CD4-positive, alpha-beta T cell (primary cell): ENCODE measurements at regions of chr18 and their contacts with region 1.

Region 1: GRCh38 chr18:21632393-21632792 is 20.3 kb downstream of the SNRPD1 start:
- DNase-seq: peak in 1 of 14 experiments; percentile 8
- ATAC-seq: no peak
- H3K4me3 ChIP-seq: no peak overlapping the region
- H3K4me3 Mint-ChIP-seq: no peak overlapping the region
- H3K27ac ChIP-seq: no peak overlapping the region
- H3K27ac Mint-ChIP-seq: peak overlapping the region; percentile 27
- H3K4me1 ChIP-seq: peaks cover 5% of the 10 kb centered on the region
- H3K4me1 Mint-ChIP-seq: peaks cover 17% of the 10 kb centered on the region
- H3K27me3 ChIP-seq: no peaks in the 10 kb centered on the region
- H3K27me3 Mint-ChIP-seq: no peaks in the 10 kb centered on the region
- CTCF ChIP-seq: no peak

Region 2: DNA sequence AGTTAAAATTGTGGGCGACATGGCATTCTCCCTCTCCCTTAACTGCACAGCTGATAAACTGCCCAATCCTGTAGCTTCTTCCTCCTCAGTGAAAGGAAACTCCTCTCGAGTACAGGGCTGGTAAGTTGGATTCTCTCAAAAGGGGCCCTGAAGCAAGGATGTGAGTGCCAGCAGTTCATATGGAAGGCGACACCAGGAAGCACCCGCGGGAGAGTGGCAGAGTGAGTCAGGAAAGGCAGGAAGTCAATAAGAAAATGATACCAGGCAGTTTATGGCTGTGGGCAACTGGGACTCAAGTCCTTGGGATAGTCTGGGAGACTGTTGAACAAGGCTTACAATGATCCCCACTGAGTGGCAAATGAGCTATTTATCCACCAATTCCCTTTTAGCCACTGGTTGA is 37.3 kb after region 1 on chr18:
- CTCF ChIA-PET with region 1: no interaction called
- POLR2A ChIA-PET with region 1: no interaction called
- intact Hi-C with region 1: no loop called
- DNase-seq: no peak
- ATAC-seq: no peak
- H3K4me3 ChIP-seq: no peak overlapping the region
- H3K4me3 Mint-ChIP-seq: no peak overlapping the region
- H3K27ac ChIP-seq: no peak overlapping the region
- H3K27ac Mint-ChIP-seq: no peak overlapping the region
- H3K4me1 ChIP-seq: no peaks in the 10 kb centered on the region
- H3K4me1 Mint-ChIP-seq: no peaks in the 10 kb centered on the region
- H3K27me3 ChIP-seq: no peaks in the 10 kb centered on the region
- H3K27me3 Mint-ChIP-seq: no peaks in the 10 kb centered on the region
- CTCF ChIP-seq: no peak

Region 3: GRCh38 chr18:21851327-21851972 is 219.1 kb after region 1 on chr18:
- CTCF ChIA-PET with region 1: no interaction called
- POLR2A ChIA-PET with region 1: no interaction called
- intact Hi-C with region 1: loop called in 1 of 2 experiments (anchors 5 kb)
- DNase-seq: peak in 2 of 14 experiments; percentile 18 to 24
- ATAC-seq: no peak
- H3K4me3 ChIP-seq: no peak overlapping the region
- H3K4me3 Mint-ChIP-seq: no peak overlapping the region
- H3K27ac ChIP-seq: no peak overlapping the region
- H3K27ac Mint-ChIP-seq: no peak overlapping the region
- H3K4me1 ChIP-seq: no peaks in the 10 kb centered on the region
- H3K4me1 Mint-ChIP-seq: peaks cover 5% of the 10 kb centered on the region
- H3K27me3 ChIP-seq: no peaks in the 10 kb centered on the region
- H3K27me3 Mint-ChIP-seq: no peaks in the 10 kb centered on the region
- CTCF ChIP-seq: peak; percentile 41

Region 4: GRCh38 chr18:21955757-21956652 is 323.6 kb after region 1 on chr18:
- CTCF ChIA-PET with region 1: no interaction called
- POLR2A ChIA-PET with region 1: interaction called, 5 read pairs
- intact Hi-C with region 1: loop called in 1 of 2 experiments (anchors 2 kb)
- DNase-seq: peak; percentile 60 to 85 (median 75)
- ATAC-seq: peak; percentile 83
- H3K4me3 ChIP-seq: no peak overlapping the region
- H3K4me3 Mint-ChIP-seq: no peak overlapping the region
- H3K27ac ChIP-seq: no peak overlapping the region
- H3K27ac Mint-ChIP-seq: no peak overlapping the region
- H3K4me1 ChIP-seq: no peaks in the 10 kb centered on the region
- H3K4me1 Mint-ChIP-seq: no peaks in the 10 kb centered on the region
- H3K27me3 ChIP-seq: no peaks in the 10 kb centered on the region
- H3K27me3 Mint-ChIP-seq: peaks cover 30% of the 10 kb centered on the region
- CTCF ChIP-seq: peak; percentile 94